ENCODE measurements at regions of chr11 and their contacts with region 1.

Region 1: DNA sequence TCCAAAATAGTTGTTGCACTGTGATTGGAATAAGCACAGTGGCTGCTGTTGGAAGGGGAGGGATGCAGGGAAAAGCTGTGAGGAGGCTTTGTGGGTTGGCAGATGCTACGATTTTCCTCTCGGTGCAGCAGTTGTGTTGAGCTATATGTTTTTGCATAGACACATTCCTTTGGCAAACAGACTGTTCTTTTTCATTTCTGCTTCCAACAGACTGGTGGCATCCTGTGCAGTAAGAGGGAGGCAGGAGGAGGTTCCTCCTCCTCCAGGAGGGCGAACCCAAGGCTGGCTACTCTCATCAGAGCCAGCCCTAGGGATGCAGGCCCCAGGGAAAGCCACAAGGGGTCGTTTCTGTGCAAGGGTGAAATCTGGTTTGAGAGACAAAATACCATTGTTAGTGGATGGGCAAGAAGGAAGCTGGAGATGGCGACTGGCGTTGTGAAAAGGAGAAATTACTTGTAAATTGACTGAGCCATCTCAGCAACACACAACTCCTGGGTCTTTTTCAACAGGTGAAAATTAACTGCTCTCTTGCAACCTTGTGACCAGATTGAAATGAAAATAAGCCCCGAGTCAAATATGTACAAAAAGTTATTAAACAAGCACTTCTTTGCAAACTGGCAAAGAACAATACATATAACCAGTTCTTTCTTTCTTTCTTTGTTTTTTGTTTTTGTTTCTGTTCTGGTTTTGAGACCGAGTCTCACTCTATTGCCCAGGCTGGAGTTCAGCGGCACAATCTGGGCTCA is 26.5 kb upstream of the UBASH3B start:
- DNase-seq: peak; percentile 86
- H3K4me3 ChIP-seq: no peak overlapping the region
- H3K27ac ChIP-seq: no peak overlapping the region
- H3K4me1 ChIP-seq: peaks cover 0 to 29% (median 17%) of the 10 kb centered on the region in 6 donors
- H3K27me3 ChIP-seq: peaks cover 0 to 5% (median 0%) of the 10 kb centered on the region in 7 donors
- CTCF ChIP-seq: peak; percentile 71 to 94 (median 90)
- POLR2A ChIP-seq: no peak

Region 2: DNA sequence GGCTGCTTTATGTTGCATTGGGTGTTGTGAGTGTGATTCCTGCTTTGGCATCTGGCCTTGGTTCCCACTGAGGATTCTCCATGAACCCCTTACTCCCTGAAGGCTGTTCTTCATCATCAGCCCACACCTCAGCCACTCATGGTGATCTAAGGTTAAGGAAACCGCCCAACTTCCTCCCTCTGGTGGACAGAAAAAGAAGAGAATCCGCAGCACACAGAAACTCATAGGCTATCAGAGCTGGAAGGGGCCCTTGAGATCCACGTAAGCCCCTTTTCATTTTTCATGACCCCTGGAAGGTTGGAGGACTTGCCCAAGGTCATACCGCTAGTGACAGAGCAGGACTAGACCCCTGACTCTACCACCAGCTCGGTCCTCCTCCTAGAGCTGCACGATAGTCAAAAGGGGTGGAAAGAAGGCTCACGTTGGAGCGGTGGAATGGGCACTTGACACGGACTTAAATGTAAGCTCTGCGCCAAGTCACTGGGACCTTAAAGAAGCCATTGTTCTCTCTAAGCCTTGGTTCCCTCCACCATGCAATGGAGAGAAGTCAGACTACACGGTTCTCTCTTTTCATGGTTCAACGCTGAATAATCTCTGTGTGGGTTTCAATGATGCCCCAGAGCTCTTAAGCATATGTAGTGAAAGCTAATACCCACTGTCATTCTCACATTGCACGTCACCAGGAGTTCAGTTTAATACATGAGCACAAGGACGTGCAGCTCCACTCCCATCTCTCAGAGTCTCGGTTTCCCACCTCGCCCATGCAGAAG is 125.8 kb after region 1 on chr11:
- intact Hi-C with region 1: loop called (anchors 5 kb)
- DNase-seq: no peak
- H3K4me3 ChIP-seq: no peak overlapping the region
- H3K27ac ChIP-seq: peak overlapping the region in 6 of 8 donors; percentile 29 to 75 (median 71)
- H3K4me1 ChIP-seq: peaks cover 26 to 99% (median 58%) of the 10 kb centered on the region in 6 donors
- H3K27me3 ChIP-seq: no peaks in the 10 kb centered on the region
- CTCF ChIP-seq: peak; percentile 38 to 71 (median 58)
- POLR2A ChIP-seq: no peak

Region 3: DNA sequence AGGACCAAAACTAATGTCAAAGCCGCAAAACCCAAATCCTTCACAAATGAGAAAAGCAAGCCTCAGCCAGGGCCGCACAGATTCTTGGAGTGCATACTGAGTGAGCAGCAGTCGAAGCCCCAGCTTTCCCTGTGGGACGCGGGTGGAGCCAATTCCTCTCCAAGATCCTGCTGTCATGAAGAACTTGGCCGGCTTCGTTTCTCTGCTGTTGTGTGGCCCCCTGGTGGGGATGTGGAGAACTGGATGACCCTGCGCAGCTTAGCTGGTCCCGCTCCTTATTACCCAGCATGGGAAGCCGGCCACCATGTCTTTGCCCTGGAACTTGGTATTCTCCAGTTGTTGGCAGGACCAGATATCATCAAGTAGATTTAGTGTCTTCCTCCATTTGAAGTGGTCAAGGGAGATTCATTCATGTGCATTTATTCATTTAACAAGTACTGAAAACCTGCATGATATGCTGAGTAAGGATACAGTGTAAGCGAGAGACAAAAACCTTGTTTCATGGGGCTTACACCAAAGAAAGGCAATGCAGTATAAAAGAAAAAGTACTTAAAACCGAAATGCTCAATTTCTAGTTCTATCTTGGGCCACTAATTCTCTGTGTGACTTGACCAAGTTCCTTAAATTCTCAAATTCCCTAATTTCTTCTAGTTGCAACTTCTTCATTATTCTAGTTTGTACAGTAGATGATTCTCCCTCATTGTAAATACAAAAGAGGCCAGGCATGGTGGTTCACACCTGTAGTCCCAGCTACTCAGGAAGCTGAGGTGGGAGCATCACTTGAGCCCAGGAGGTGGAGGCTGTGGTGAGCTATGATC is 152.6 kb after region 1 on chr11:
- intact Hi-C with region 1: loop called (anchors 10 kb)
- DNase-seq: peak; percentile 92
- H3K4me3 ChIP-seq: no peak overlapping the region
- H3K27ac ChIP-seq: peak overlapping the region in 4 of 8 donors; percentile 19 to 54 (median 44)
- H3K4me1 ChIP-seq: peaks cover 7 to 70% (median 44%) of the 10 kb centered on the region in 6 donors
- H3K27me3 ChIP-seq: no peaks in the 10 kb centered on the region
- CTCF ChIP-seq: peak; percentile 86 to 96 (median 94)
- POLR2A ChIP-seq: no peak

Region 4: DNA sequence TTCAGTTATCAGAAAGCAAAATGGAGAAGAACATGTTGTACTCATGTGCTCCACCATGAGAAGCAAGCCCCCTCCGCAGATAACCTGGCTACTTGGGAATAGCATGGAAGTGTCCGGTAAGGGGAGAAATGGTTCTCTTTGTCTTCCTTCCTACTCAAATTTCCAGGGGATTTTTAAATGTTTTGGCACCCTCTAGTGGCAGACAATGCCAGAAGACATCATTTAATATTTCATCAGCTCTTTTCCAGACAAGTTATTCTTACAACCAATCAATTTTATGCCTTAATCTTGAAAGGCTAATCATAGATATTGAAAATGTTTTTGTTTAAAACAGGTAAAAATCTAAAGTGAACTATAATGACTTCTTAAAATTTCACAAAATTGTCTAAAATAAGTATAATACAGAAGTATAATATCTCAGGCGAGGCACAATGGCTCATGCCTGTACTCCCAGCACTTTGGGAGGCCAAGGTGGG is 225.0 kb after region 1 on chr11:
- intact Hi-C with region 1: loop called (anchors 5 kb)
- DNase-seq: no peak
- H3K4me3 ChIP-seq: no peak overlapping the region
- H3K27ac ChIP-seq: no peak overlapping the region
- H3K4me1 ChIP-seq: peaks cover 0 to 57% (median 16%) of the 10 kb centered on the region in 6 donors
- H3K27me3 ChIP-seq: no peaks in the 10 kb centered on the region
- CTCF ChIP-seq: peak; percentile 47 to 83 (median 70)
- POLR2A ChIP-seq: no peak

Region 5: DNA sequence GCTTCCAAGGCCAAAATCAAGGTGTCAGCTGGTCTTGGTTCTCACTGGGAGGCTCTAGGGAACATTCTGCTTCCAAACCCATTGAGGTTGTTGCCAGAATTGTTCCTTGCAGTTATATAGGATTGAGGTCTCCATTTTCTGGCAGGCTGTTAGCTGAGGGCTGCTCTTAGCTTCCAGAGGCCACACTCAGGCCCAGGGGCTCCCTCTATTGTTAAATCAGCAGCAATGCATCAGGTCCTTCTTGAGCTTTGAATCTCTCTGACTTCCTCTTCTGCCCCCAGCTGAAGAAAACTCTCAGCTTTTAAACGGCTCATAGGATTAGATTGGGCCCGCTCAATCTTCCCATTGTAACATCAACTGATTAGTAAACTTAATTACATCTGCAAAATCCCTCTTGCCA is 392.0 kb after region 1 on chr11:
- intact Hi-C with region 1: loop called (anchors 10 kb)
- DNase-seq: no peak
- H3K4me3 ChIP-seq: no peak overlapping the region
- H3K27ac ChIP-seq: no peak overlapping the region
- H3K4me1 ChIP-seq: peaks cover 0 to 12% (median 8%) of the 10 kb centered on the region in 6 donors
- H3K27me3 ChIP-seq: peaks cover 0 to 11% (median 0%) of the 10 kb centered on the region in 7 donors
- CTCF ChIP-seq: peak in 9 of 11 experiments; percentile 14 to 67 (median 44)
- POLR2A ChIP-seq: no peak

Measured in spleen (tissue), 13 donors.